Activated T-helper 1 cell treated with anti-CD3 and anti-CD28 coated beads, Interleukin-12 subunit alpha, Interleukin-12 subunit beta, Interleukin-2, Interleukin-4 antibody, amounts not matched to agents 30 ng/mL and 10 ng/mL and 1 ng/mL, durations not matched to agents 14 hours and 24 hours and 36 hours (primary cell): ENCODE measurements at regions of chr1 and their contacts with region 1.

Region 1: DNA sequence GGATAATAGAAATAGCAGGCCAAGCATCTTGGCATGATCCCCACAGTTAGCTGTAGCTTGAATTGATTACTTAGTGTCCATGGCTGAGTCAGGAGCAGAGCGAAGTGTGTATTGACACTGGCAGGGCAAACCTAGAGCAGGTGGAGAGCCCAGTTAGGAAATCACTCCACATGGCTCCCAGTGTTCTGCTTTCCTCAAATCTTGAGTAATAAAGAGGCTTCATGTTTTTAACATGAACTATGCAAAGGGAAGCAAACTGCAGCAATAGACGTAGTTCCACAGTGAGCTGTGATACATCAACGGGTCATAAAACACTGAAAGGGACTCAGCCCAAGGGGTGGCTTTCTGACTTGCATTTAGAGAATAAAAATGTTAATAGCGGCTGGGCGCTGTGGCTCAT is 28.9 kb downstream of the RHEX start:
- DNase-seq: no peak
- H3K4me3 Mint-ChIP-seq: no peak overlapping the region
- H3K27ac Mint-ChIP-seq: no peak overlapping the region
- H3K4me1 Mint-ChIP-seq: peaks cover 18% of the 10 kb centered on the region
- H3K27me3 Mint-ChIP-seq: peaks cover 33% of the 10 kb centered on the region

Region 2: DNA sequence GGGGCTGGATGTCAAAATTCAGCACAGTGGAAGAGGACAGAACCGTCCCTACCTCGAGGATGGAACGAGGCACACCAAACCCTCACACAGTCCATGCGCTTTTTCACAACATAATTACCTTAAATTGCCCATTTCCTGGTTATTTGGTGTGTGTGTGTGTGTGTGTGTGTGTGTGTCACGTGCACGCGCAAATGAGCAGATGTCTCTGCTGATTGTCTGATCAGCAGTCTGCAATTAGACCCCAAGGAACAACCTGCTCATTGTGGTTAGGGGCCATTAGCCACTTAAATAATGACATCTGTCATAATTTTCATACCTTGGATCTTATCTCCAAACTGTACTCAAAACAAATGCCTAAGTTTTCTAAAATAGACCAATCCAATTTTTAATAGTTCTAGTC is 12.2 kb after region 1 on chr1:
- intact Hi-C with region 1: loop called (anchors 1 kb)
- DNase-seq: no peak
- H3K4me3 Mint-ChIP-seq: no peak overlapping the region
- H3K27ac Mint-ChIP-seq: no peak overlapping the region
- H3K4me1 Mint-ChIP-seq: no peaks in the 10 kb centered on the region
- H3K27me3 Mint-ChIP-seq: peaks cover 43% of the 10 kb centered on the region

Region 3: GRCh38 chr1:206143537-206144172 is 61.8 kb after region 1 on chr1:
- intact Hi-C with region 1: no loop called
- DNase-seq: no peak
- H3K4me3 Mint-ChIP-seq: no peak overlapping the region
- H3K27ac Mint-ChIP-seq: no peak overlapping the region
- H3K4me1 Mint-ChIP-seq: peaks cover 8% of the 10 kb centered on the region
- H3K27me3 Mint-ChIP-seq: peaks cover 51% of the 10 kb centered on the region

Region 4: GRCh38 chr1:207181838-207182237 is 1100.0 kb after region 1 on chr1:
- intact Hi-C with region 1: no loop called
- DNase-seq: no peak
- H3K4me3 Mint-ChIP-seq: no peak overlapping the region
- H3K27ac Mint-ChIP-seq: no peak overlapping the region
- H3K4me1 Mint-ChIP-seq: no peaks in the 10 kb centered on the region
- H3K27me3 Mint-ChIP-seq: peaks cover 13% of the 10 kb centered on the region